ENCODE measurements at regions of chr11 and their contacts with region 1.

Region 1: DNA sequence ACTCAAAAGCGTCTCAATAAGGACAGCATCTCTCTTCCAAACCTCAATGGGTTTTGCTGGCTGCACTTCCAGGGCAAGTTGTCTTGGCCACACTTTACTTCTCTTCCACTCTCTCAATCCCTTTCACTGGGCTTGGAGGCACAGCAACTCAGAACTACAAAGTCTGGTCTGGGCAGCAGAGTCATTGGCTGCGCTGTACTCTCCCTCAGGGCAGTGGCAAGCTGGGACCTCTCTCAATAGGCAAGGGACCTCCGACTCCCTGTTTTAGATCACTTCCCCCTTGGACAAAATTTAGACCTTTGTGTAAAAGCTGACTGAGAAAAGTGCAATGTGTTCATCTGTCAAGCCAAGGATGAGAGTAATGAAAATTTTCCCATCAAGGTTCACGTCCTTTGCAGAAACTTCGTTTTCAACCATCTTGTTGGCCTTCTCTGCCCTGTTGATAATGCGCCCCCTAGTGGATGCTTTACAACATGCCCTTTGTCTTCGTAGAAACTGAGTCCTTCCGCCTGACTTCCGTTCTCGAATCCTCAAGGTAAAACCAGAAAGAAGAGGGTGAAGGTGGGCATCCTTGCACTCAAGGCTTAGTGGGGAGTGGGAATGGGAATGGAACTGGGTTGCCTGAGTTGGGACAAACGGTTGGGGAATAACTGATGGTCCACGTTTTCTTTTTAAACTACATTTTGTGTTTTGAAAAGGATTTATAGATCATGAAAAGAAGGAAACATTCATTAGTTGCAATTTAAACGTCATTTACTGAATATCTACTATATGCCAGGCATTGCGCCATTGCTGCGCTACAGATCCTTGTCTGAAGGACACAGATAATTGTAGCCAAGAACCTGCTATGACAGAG is 99.1 kb downstream of the CD44 start:
- DNase-seq: no peak
- ATAC-seq: peak in 3 of 4 donors; percentile 54 to 76 (median 66)
- H3K4me3 ChIP-seq: no peak overlapping the region
- H3K27ac ChIP-seq: no peak overlapping the region
- H3K4me1 ChIP-seq: no peaks in the 10 kb centered on the region
- H3K27me3 ChIP-seq: no peaks in the 10 kb centered on the region
- CTCF ChIP-seq: peak; percentile 86

Region 2: GRCh38 chr11:34926101-34926830 is 311.8 kb before region 1 on chr11:
- intact Hi-C with region 1: loop called (anchors 2 to 5 kb)
- DNase-seq: no peak
- ATAC-seq: peak in 3 of 4 donors; percentile 61 to 82 (median 65)
- H3K4me3 ChIP-seq: no peak overlapping the region
- H3K27ac ChIP-seq: no peak overlapping the region
- H3K4me1 ChIP-seq: peaks cover 61% of the 10 kb centered on the region
- H3K27me3 ChIP-seq: no peaks in the 10 kb centered on the region
- CTCF ChIP-seq: peak; percentile 78

Region 3: DNA sequence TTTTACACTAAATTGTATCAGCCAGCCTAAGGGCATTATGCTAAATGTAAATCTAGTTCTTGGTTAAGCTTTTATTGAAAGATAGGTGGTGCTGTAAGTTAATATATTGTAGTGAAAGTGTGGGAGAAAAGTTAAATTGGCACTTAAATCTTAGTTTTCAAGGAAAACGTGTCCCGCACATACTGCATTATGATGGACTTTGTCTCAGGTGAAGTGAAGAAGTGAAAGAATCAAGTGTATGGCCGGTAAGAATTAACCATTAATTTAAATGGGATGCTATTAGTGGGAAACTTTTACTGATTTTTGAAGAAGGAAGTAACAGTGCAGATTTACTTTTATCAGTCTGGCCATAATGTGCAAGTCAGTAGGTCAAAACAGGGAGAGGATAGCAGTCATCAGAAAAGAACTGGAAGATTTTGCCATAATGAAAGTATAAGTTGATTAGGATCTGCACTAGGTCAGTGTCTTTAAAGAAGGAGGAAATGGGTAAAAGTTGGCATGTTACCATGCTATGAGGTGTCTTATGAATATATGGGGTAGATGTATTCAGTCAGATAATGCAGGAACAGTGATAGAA is 240.0 kb before region 1 on chr11:
- intact Hi-C with region 1: loop called (anchors 5 kb)
- DNase-seq: no peak
- ATAC-seq: peak in 2 of 4 donors; percentile 47 to 57
- H3K4me3 ChIP-seq: no peak overlapping the region
- H3K27ac ChIP-seq: no peak overlapping the region
- H3K4me1 ChIP-seq: peaks cover 1% of the 10 kb centered on the region
- H3K27me3 ChIP-seq: no peaks in the 10 kb centered on the region
- CTCF ChIP-seq: peak; percentile 43

Region 4: DNA sequence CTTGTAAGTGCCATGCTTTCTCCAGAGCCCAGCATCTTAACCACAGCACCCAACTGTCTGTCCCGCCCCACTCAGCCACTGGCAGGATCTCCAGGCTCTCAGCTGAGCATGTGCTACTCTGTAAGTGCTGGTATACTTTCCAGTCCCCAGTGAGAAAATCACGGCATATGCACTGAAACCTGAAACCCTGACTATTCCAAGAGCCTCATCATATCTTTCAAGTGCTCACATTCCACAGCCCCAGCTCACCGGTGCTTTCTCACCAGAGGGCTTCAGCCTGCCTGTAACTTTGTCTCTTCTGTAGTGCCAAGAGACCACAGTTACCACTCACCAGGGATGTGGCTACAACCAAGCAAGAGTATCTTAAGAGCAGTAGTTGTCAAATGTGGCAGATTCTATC is 311.7 kb after region 1 on chr11:
- intact Hi-C with region 1: no loop called
- DNase-seq: no peak
- ATAC-seq: no peak
- H3K4me3 ChIP-seq: no peak overlapping the region
- H3K27ac ChIP-seq: no peak overlapping the region
- H3K4me1 ChIP-seq: no peaks in the 10 kb centered on the region
- H3K27me3 ChIP-seq: no peaks in the 10 kb centered on the region
- CTCF ChIP-seq: no peak

Measured in psoas muscle (tissue), 8 donors.